ENCODE measurements at regions of chr17 and their contacts with region 1.

Region 1: DNA sequence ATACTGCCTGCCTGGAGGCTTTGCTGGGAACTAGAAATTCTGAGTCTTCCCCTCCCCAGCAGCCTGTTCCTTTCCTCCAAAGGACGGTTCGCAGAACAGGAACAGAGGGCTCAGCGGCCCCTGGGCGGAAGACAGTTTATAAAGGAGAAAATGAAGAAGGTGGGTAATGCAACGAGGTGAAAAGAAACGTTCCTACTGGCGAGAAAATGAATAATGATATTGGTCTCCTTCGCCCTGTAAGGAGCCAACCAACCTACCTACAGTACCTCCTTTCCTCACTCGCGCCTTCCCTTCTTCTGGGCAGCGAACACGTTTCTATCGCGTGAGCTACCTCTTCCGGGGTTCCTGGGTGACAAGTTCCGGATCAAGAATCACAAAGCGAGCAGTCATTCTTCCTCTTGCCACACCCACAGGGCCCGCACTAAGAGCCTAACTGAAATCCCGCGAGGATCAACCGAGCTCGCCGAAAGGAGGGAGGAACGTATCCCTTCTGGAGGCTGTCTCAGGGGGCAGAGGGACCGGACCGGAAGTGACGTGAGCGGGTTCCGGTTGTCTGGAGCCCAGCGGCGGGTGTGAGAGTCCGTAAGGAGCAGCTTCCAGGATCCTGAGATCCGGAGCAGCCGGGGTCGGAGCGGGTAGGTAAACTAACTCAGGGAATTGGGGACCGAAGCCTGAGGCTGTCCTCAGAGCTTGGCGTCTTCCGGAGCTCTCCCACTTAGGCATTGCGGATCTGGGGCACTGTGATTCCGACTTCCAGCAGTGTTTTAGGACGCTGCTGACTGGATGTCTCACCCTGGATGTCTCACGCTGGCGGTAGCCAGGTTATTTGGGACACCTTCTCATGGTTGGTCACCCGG is at the starts of genes PTRH2 and VMP1:
- DNase-seq: peak; percentile 96
- H3K4me3 ChIP-seq: peak within 1 kb of the TSS; percentile 88 to 90
- H3K27ac ChIP-seq: peak within 1 kb of the TSS; percentile 92 to 96
- H3K4me1 ChIP-seq: peaks cover 9 to 17% of the 10 kb centered on the region in 2 experiments; a peak in 3 of 4 replicates
- H3K27me3 ChIP-seq: no peaks in the 10 kb centered on the region
- CTCF ChIP-seq: no peak
- EP300 ChIP-seq: peak in 1 of 2 experiments; percentile 25; a peak in 1 of 4 replicates
- RAD21 ChIP-seq: no peak
- polyA plus RNA-seq, gene PTRH2: 101 and 140 TPM in 2 replicates
- polyA plus RNA-seq, gene VMP1: 169 and 338 TPM in 2 replicates

Region 2: GRCh38 chr17:59619293-59620063 is 87.9 kb before region 1 on chr17 and contains the start of gene CLTC:
- CTCF ChIA-PET with region 1: no interaction called
- POLR2A ChIA-PET with region 1: interaction called, 13 read pairs
- DNase-seq: peak; percentile 94
- H3K4me3 ChIP-seq: peak within 1 kb of the TSS; percentile 94 to 97
- H3K27ac ChIP-seq: peak within 1 kb of the TSS; percentile 98 to 99
- H3K4me1 ChIP-seq: peaks cover 24 to 28% of the 10 kb centered on the region in 2 experiments; a peak in 3 of 4 replicates
- H3K27me3 ChIP-seq: no peaks in the 10 kb centered on the region
- CTCF ChIP-seq: no peak; the same call in 1 of the 2 replicates
- EP300 ChIP-seq: peak in 1 of 2 experiments; percentile 62; a peak in 2 of 4 replicates
- RAD21 ChIP-seq: no peak; the same call in 1 of the 2 replicates
- polyA plus RNA-seq, gene CLTC: 160 and 217 TPM in 2 replicates

Region 3: DNA sequence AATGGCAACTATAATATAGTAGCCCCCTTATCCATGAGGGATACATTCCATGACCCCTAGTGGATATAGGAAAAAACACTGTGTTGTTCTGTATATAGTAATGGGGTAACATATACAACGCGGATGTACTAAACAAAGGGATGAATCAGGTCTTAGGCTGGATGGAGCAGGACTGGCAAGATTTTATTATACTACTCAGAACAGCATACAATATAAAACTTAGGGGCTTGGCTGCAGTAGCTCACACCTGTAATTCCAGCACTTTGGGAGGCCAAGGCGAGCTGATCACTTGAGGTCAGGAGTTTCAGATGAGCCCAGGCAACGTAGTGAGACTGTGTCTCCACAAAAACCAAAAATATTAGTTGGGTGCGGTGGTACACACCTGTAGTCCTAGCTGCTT is 26.9 kb after region 1 on chr17:
- CTCF ChIA-PET with region 1: no interaction called
- POLR2A ChIA-PET with region 1: no interaction called
- DNase-seq: no peak
- H3K4me3 ChIP-seq: no peak overlapping the region
- H3K27ac ChIP-seq: no peak overlapping the region
- H3K4me1 ChIP-seq: no peaks in the 10 kb centered on the region
- H3K27me3 ChIP-seq: no peaks in the 10 kb centered on the region
- CTCF ChIP-seq: no peak
- EP300 ChIP-seq: no peak
- RAD21 ChIP-seq: no peak

Measured in SK-N-SH (cell line).